ENCODE measurements at regions of chr5 and their contacts with region 1.

Region 1: GRCh38 chr5:39424736-39425637 is at the start of gene DAB2:
- DNase-seq: peak; percentile 99
- H3K4me3 ChIP-seq: peak within 1 kb of the TSS; percentile 56 to 100 (median 99)
- H3K27ac ChIP-seq: peak within 1 kb of the TSS; percentile 91
- H3K4me1 ChIP-seq: peaks cover 61% of the 10 kb centered on the region
- H3K27me3 ChIP-seq: no peaks in the 10 kb centered on the region
- CTCF ChIP-seq: peak; percentile 87 to 88
- POLR2A ChIP-seq: peak; percentile 36
- total RNA-seq, gene DAB2: 245 and 283 TPM in 2 replicates

Region 2: GRCh38 chr5:39238366-39239105 is 186.5 kb before region 1 on chr5:
- CTCF ChIA-PET with region 1: no interaction called
- POLR2A ChIA-PET with region 1: no interaction called
- dilution Hi-C with region 1: no loop called
- intact Hi-C with region 1: no loop called
- DNase-seq: no peak
- H3K4me3 ChIP-seq: no peak overlapping the region
- H3K27ac ChIP-seq: no peak overlapping the region
- H3K4me1 ChIP-seq: no peaks in the 10 kb centered on the region
- H3K27me3 ChIP-seq: no peaks in the 10 kb centered on the region
- CTCF ChIP-seq: no peak
- POLR2A ChIP-seq: no peak

Region 3: DNA sequence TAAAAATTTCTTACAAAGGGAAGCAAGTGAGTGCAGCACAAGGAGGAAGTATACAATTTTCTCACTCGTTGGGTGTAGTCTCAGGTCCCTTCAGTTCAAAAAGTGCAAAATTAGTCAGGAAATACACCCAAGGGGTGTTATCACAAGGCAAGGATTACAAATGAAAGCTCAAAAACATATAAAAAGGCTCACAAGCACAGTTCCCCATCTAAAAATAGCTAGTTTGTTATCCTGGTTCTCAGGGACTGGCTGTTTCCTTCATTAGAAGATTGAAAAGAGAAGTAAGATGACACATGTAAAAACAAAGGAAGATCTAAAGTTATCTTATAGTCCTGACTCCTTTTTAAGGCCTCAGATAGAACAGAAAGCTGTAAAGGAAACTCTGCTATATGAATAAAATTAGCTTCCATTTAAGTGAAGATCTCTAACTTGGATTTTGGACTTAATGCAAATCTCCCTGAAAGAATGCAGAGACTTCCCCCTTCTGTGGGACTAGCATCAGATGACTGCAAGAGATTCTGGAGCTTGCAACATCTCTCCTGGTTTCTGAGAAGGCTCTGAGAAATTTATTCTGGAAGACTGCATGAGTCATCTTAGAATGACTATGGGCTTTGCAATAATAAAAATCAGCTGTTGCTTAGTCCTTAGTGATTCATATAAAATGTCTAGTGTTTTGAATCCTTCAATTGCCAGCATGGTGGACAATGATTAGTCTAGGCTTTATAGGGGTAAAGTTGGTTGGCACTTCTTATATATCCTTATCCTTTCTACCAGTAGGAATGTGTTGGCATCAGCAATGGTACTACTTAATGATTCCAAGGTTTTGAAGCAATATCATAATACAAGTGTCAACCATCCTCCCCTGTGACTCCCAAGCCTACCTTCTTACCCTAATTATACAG is 25.6 kb before region 1 on chr5:
- CTCF ChIA-PET with region 1: interaction called, 20 read pairs
- POLR2A ChIA-PET with region 1: interaction called, 9 read pairs
- dilution Hi-C with region 1: no loop called
- intact Hi-C with region 1: loop called (anchors 2 kb)
- DNase-seq: peak; percentile 76
- H3K4me3 ChIP-seq: no peak overlapping the region
- H3K27ac ChIP-seq: peak overlapping the region; percentile 75
- H3K4me1 ChIP-seq: peaks cover 25% of the 10 kb centered on the region
- H3K27me3 ChIP-seq: no peaks in the 10 kb centered on the region
- CTCF ChIP-seq: no peak
- POLR2A ChIP-seq: no peak

Region 4: GRCh38 chr5:39447059-39447458 is 22.1 kb after region 1 on chr5:
- CTCF ChIA-PET with region 1: interaction called, 16 read pairs
- POLR2A ChIA-PET with region 1: interaction called, 12 read pairs
- dilution Hi-C with region 1: no loop called
- intact Hi-C with region 1: no loop called
- DNase-seq: peak; percentile 72
- H3K4me3 ChIP-seq: no peak overlapping the region
- H3K27ac ChIP-seq: peak overlapping the region; percentile 50
- H3K4me1 ChIP-seq: peaks cover 19% of the 10 kb centered on the region
- H3K27me3 ChIP-seq: no peaks in the 10 kb centered on the region
- CTCF ChIP-seq: no peak
- POLR2A ChIP-seq: no peak

Region 5: DNA sequence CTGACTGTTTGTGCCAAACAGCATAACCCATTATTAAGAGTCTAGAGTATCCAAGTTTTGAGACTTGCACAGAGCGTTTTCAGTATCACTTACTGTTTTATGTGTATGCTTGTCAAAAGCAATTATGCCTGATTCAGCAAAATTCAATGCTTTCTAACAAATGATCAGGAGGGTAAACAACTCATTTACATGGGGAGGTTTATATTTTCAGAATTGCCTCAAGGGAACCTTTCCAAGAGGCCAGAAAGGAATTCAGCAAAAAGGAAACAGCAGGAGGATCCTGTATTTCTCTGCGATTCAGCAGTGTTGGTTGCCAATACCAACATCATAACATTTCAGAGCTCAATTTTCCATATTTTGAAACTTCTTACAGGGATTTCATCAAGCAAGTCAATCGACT is 69.1 kb after region 1 on chr5:
- CTCF ChIA-PET with region 1: interaction called, 14 read pairs
- POLR2A ChIA-PET with region 1: interaction called, 8 read pairs
- dilution Hi-C with region 1: no loop called
- intact Hi-C with region 1: no loop called
- DNase-seq: peak; percentile 87
- H3K4me3 ChIP-seq: no peak overlapping the region
- H3K27ac ChIP-seq: no peak overlapping the region
- H3K4me1 ChIP-seq: peaks cover 7% of the 10 kb centered on the region
- H3K27me3 ChIP-seq: no peaks in the 10 kb centered on the region
- CTCF ChIP-seq: no peak
- POLR2A ChIP-seq: no peak

Region 6: GRCh38 chr5:39526914-39527477 is 102.0 kb after region 1 on chr5:
- CTCF ChIA-PET with region 1: interaction called, 50 read pairs
- POLR2A ChIA-PET with region 1: interaction called, 34 read pairs
- dilution Hi-C with region 1: loop called (anchors 25 kb)
- intact Hi-C with region 1: loop called (anchors 1 kb)
- DNase-seq: peak; percentile 98
- H3K4me3 ChIP-seq: no peak overlapping the region
- H3K27ac ChIP-seq: peak overlapping the region; percentile 99
- H3K4me1 ChIP-seq: peaks cover 37% of the 10 kb centered on the region
- H3K27me3 ChIP-seq: no peaks in the 10 kb centered on the region
- CTCF ChIP-seq: no peak
- POLR2A ChIP-seq: peak; percentile 15

Region 7: GRCh38 chr5:39570403-39571027 is 145.5 kb after region 1 on chr5:
- CTCF ChIA-PET with region 1: interaction called, 12 read pairs
- POLR2A ChIA-PET with region 1: no interaction called
- dilution Hi-C with region 1: no loop called
- intact Hi-C with region 1: loop called (anchors 1 kb)
- DNase-seq: peak; percentile 61
- H3K4me3 ChIP-seq: no peak overlapping the region
- H3K27ac ChIP-seq: no peak overlapping the region
- H3K4me1 ChIP-seq: peaks cover 4% of the 10 kb centered on the region
- H3K27me3 ChIP-seq: no peaks in the 10 kb centered on the region
- CTCF ChIP-seq: peak; percentile 35 to 37
- POLR2A ChIP-seq: no peak

Measured in endothelial cell of umbilical vein (primary cell).